ENCODE measurements at regions of chr12 and their contacts with region 1.

Region 1: GRCh38 chr12:14257734-14258574 is 107.5 kb upstream of the ATF7IP start:
- DNase-seq: peak; percentile 97
- H3K4me3 Mint-ChIP-seq: peak overlapping the region; percentile 67
- H3K27ac Mint-ChIP-seq: peak overlapping the region; percentile 99
- H3K4me1 Mint-ChIP-seq: peaks cover 45% of the 10 kb centered on the region
- H3K27me3 Mint-ChIP-seq: no peaks in the 10 kb centered on the region

Region 2: GRCh38 chr12:14099994-14100393 is 158.0 kb before region 1 on chr12:
- CTCF ChIA-PET with region 1: no interaction called
- POLR2A ChIA-PET with region 1: no interaction called
- intact Hi-C with region 1: no loop called
- DNase-seq: no peak
- H3K4me3 Mint-ChIP-seq: no peak overlapping the region
- H3K27ac Mint-ChIP-seq: no peak overlapping the region
- H3K4me1 Mint-ChIP-seq: no peaks in the 10 kb centered on the region
- H3K27me3 Mint-ChIP-seq: peaks cover 3% of the 10 kb centered on the region

Region 3: GRCh38 chr12:14216405-14217294 is 41.3 kb before region 1 on chr12:
- CTCF ChIA-PET with region 1: interaction called, 8 read pairs
- POLR2A ChIA-PET with region 1: interaction called, 4 read pairs
- intact Hi-C with region 1: loop called (anchors 1 kb)
- DNase-seq: no peak
- H3K4me3 Mint-ChIP-seq: peak overlapping the region; percentile 44
- H3K27ac Mint-ChIP-seq: peak overlapping the region; percentile 42
- H3K4me1 Mint-ChIP-seq: peaks cover 35% of the 10 kb centered on the region
- H3K27me3 Mint-ChIP-seq: no peaks in the 10 kb centered on the region

Region 4: DNA sequence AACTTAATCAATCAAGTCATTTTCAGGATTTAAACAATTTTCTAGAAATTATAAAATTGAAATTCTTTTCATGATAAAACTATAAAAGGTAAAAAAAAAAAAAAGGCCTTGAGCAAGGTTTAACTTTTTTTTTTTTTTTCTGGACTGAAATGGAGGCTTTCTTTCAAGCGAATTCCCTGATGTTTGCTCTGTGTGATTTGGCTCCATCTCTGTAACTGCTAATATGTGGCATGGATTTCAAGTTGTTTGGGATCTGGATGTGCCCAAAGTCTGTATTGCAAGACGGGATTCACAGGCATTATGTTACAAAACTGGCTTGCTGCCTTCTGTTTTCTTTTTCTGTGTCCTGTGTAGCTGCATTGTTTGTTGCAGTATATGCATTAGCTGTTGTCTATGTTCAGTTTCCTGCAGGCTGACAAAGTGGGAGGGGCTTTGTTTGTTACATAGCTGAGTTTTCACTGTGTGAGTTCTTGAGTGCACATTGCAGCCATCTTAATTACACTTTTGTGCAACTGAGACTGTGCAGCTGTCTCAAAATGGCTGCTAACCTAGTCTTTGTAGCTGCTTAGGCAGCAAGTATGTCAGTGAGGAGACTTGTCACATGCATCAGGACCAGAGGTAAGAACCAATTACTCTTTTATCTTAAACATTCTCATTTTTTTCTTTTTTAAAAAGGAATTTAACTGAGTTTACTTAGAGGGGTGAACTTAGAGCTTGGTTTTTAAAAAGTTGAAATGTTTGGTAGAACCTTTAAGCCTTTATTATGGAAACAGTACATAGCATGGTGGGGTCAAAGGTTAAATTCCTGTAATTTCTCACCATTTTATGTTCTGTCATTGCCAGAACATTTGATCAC is 127.1 kb after region 1 on chr12:
- CTCF ChIA-PET with region 1: interaction called, 10 read pairs
- POLR2A ChIA-PET with region 1: interaction called, 13 read pairs
- intact Hi-C with region 1: loop called (anchors 1 kb)
- DNase-seq: peak; percentile 77
- H3K4me3 Mint-ChIP-seq: peak overlapping the region; percentile 81
- H3K27ac Mint-ChIP-seq: peak overlapping the region; percentile 96
- H3K4me1 Mint-ChIP-seq: peaks cover 60% of the 10 kb centered on the region
- H3K27me3 Mint-ChIP-seq: no peaks in the 10 kb centered on the region

Region 5: DNA sequence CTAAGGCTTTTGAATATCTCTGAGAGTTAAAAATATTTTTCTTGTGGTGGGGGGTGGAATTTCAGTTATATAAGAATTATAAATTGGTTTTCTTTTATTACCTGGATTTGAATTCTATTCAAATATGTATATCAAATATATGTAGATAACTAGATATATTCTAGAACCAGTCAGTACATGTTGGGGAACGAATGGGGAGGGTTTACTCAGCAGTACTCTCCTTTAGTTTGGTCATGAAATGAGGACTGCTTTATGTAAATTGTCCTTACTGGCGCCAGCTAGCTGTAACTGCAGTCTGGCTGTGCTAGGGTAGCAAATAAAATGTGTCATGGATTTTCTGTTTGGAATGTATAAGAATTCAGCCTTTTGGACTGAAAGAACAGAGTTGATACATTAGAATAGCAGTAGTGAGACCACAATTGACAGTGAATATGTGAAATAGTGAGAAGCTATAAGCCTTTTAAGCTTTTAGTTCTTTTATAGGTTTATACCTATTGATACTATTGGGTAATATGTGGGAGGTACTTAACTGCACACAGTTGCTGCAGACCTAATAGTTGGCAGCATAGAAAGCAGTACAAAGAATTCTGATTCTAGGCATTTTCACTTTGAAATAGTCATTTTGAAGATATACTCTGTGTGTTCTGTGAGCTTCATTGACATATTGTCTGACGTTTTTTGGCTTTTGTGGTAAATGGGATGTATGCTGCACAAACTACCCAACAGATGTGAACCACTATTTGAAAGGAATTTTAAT is 136.5 kb after region 1 on chr12:
- CTCF ChIA-PET with region 1: interaction called, 11 read pairs
- POLR2A ChIA-PET with region 1: interaction called, 9 read pairs
- intact Hi-C with region 1: loop called (anchors 1 kb)
- DNase-seq: peak; percentile 53
- H3K4me3 Mint-ChIP-seq: peak overlapping the region; percentile 74
- H3K27ac Mint-ChIP-seq: peak overlapping the region; percentile 93
- H3K4me1 Mint-ChIP-seq: peaks cover 79% of the 10 kb centered on the region
- H3K27me3 Mint-ChIP-seq: no peaks in the 10 kb centered on the region

Region 6: GRCh38 chr12:14417715-14418114 is 159.8 kb after region 1 on chr12:
- CTCF ChIA-PET with region 1: interaction called, 11 read pairs
- POLR2A ChIA-PET with region 1: interaction called, 3 read pairs
- intact Hi-C with region 1: loop called (anchors 1 kb)
- DNase-seq: peak; percentile 85
- H3K4me3 Mint-ChIP-seq: peak overlapping the region; percentile 69
- H3K27ac Mint-ChIP-seq: peak overlapping the region; percentile 94
- H3K4me1 Mint-ChIP-seq: peaks cover 63% of the 10 kb centered on the region
- H3K27me3 Mint-ChIP-seq: no peaks in the 10 kb centered on the region

Region 7: DNA sequence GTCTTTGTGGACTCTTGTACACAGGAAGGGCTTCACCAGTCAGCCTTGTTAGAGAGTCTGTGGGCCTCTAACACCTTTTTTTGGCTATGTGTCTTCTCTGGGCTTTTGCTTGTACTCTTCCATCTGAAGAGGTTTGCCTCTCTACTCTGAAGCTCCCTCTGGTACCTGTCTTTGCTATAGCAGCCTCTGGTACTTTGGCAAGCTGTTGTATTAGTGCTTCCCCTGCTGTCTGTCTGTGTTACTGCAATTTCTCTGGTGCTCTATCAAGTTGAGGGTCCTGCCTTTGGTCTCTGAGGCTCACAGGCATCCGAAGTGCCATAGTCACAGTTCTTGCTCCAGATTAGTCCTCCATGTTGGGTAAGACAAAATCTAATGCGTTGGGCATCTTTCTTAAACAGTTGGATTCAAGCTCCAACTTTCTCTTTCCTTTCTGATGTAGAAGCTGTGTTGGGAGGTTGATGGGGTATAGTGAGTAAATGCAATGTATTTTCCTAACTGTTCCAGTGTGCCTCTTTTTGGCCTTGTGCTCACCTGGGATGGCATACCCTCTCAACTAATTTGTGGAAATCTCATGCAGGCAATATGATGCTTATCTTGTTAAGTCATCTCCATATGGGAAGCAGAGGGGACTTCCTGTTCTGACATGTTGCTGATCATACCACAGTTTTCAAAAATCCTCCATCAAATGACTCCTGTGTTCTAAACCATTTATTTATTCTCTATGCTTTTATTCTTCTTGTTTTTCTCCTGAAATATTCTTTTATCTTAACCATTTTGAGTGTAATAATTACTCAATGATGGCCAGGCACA is 196.3 kb after region 1 on chr12:
- CTCF ChIA-PET with region 1: interaction called, 12 read pairs
- POLR2A ChIA-PET with region 1: no interaction called
- intact Hi-C with region 1: loop called (anchors 1 kb)
- DNase-seq: peak; percentile 31
- H3K4me3 Mint-ChIP-seq: peak overlapping the region; percentile 20
- H3K27ac Mint-ChIP-seq: peak overlapping the region; percentile 77
- H3K4me1 Mint-ChIP-seq: peaks cover 56% of the 10 kb centered on the region
- H3K27me3 Mint-ChIP-seq: no peaks in the 10 kb centered on the region

Region 8: GRCh38 chr12:14479004-14479403 is 221.1 kb after region 1 on chr12:
- CTCF ChIA-PET with region 1: interaction called, 3 read pairs
- POLR2A ChIA-PET with region 1: interaction called, 3 read pairs
- intact Hi-C with region 1: loop called (anchors 2 kb)
- DNase-seq: no peak
- H3K4me3 Mint-ChIP-seq: no peak overlapping the region
- H3K27ac Mint-ChIP-seq: peak overlapping the region; percentile 67
- H3K4me1 Mint-ChIP-seq: peaks cover 22% of the 10 kb centered on the region
- H3K27me3 Mint-ChIP-seq: no peaks in the 10 kb centered on the region